WTC11 (cell line): ENCODE measurements at regions of chr12 and their contacts with region 1.

Region 1: DNA sequence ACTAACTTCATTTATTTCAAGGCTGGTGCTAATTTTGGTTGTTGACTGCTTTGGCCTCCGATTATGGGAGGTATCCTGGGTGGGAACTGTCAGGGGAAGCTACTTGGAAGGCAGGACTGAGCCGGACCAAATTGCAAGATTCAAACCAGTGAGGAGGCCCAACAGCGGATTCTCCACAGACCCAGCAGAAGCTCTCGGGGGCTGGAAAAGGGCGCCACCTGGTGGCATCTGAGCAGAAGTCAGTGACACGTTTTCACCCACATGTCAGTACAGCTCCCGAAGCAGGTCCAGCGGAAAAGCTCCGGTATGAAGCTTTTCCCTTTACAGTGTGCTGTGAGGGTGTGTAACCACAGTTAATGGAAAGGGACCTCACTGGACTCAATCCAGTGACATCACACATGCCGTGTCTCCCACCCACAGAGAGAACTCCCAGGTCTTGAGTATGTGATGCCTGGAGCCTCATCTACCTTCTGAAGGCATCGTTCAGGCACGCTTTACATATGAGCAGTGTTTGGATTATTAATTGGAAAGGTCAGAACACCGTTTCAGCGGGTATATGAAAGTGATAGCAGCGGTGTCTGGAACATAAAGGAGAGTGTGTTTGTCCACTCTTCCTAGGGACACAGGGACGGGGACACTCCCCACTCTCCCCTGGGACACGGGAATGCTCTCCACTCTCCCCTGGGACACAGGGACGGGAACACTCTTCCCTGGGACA is 3.6 kb upstream of the P2RX2 start:
- DNase-seq: peak; percentile 88
- ATAC-seq: peak; percentile 63
- H3K4me3 Mint-ChIP-seq: no peak overlapping the region
- H3K27ac Mint-ChIP-seq: no peak overlapping the region
- H3K4me1 Mint-ChIP-seq: peaks cover 5% of the 10 kb centered on the region
- H3K27me3 Mint-ChIP-seq: peaks cover 83% of the 10 kb centered on the region
- CTCF ChIP-seq: peak; percentile 91

Region 2: DNA sequence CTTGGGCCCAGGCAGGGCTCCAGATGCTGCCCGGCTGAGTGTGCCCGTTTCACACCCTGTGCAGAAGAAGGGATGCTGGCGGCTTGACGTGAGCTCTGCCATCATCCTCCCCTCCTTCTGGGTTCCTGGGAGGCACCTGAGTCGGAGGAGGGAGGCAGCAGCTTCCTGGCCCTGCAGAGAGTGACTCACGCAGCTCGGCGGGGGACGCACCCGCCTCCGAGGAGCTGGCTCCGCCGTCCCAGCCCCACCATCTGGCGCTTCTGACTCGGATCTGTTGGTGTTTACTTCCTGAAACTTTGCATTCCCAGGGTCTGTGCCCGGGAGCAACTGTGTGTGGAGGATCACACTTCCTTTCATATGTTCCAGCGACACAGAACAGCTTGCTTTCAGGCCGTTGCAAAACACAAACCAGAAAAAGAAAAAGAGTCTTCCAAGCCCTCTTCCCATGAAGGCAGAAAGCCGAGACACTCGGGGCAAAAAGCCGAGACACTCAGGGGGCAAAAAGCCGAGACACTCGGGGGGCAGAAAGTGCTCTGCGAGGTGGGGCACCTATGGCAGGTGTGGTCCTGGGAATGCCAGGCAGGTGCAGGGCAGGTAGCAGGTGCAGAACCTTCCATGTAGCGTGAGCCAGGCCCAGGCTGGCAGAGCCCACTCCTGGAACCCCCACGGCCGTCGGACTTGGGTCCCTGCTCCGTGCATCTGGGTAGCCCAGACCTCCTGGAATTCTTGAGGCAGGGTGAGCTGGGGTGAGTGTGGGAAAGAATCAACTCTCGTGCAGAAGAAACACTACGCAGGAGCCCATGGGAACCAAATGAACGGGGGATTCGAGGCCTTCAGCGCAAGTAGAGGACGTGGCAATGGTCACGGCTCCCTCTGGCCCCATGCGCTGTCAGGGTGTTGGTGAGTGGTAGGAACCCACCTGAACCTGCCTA is 258.1 kb before region 1 on chr12:
- CTCF ChIA-PET with region 1: no interaction called
- POLR2A ChIA-PET with region 1: no interaction called
- DNase-seq: no peak
- ATAC-seq: peak; percentile 57
- H3K4me3 Mint-ChIP-seq: no peak overlapping the region
- H3K27ac Mint-ChIP-seq: no peak overlapping the region
- H3K4me1 Mint-ChIP-seq: peaks cover 6% of the 10 kb centered on the region
- H3K27me3 Mint-ChIP-seq: peaks cover 37% of the 10 kb centered on the region
- CTCF ChIP-seq: no peak

Region 3: GRCh38 chr12:132439333-132439904 is 175.6 kb before region 1 on chr12:
- CTCF ChIA-PET with region 1: no interaction called
- POLR2A ChIA-PET with region 1: no interaction called
- DNase-seq: no peak
- ATAC-seq: no peak
- H3K4me3 Mint-ChIP-seq: no peak overlapping the region
- H3K27ac Mint-ChIP-seq: no peak overlapping the region
- H3K4me1 Mint-ChIP-seq: peaks cover 16% of the 10 kb centered on the region
- H3K27me3 Mint-ChIP-seq: peaks cover 85% of the 10 kb centered on the region
- CTCF ChIP-seq: no peak

Region 4: DNA sequence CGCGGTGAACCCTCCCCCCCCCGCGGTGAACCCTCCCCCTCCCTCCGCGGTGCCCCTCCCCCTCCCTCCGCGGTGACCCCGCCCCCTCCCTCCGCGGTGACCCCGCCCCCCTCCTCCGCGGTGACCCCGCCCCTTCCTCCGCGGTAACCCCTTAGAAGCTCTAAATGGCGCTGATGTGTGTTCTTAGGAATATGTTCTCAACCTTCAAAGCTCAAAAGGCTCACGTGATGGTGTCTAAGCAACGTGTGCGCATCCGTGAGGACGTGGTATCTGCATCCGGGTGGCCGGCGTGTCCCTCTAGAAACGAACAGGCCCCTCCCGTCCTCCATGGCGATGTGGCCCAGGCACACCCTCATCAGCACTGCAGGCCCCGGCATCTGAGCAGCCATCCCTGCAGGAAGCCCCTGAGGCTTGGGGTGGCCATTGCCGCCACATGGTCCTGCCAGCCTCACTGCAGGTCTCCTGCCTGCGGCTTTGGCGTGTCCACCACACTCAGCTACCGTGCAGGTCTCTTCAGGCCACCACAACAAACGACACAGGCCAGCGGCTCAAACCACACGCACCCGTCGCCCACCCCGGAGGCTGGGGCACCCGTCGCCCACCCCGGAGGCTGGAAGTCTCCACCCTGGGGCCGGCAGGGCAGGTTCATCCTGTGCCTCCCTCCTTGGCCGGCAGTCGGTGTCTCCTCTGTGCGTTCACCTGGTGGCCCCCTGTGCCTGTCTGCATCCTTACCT is 139.5 kb before region 1 on chr12:
- CTCF ChIA-PET with region 1: no interaction called
- POLR2A ChIA-PET with region 1: no interaction called
- DNase-seq: no peak
- ATAC-seq: no peak
- H3K4me3 Mint-ChIP-seq: no peak overlapping the region
- H3K27ac Mint-ChIP-seq: peak overlapping the region; percentile 64; the same call in 1 of the 2 replicates
- H3K4me1 Mint-ChIP-seq: no peaks in the 10 kb centered on the region
- H3K27me3 Mint-ChIP-seq: peaks cover 58% of the 10 kb centered on the region
- CTCF ChIP-seq: no peak

Region 5: DNA sequence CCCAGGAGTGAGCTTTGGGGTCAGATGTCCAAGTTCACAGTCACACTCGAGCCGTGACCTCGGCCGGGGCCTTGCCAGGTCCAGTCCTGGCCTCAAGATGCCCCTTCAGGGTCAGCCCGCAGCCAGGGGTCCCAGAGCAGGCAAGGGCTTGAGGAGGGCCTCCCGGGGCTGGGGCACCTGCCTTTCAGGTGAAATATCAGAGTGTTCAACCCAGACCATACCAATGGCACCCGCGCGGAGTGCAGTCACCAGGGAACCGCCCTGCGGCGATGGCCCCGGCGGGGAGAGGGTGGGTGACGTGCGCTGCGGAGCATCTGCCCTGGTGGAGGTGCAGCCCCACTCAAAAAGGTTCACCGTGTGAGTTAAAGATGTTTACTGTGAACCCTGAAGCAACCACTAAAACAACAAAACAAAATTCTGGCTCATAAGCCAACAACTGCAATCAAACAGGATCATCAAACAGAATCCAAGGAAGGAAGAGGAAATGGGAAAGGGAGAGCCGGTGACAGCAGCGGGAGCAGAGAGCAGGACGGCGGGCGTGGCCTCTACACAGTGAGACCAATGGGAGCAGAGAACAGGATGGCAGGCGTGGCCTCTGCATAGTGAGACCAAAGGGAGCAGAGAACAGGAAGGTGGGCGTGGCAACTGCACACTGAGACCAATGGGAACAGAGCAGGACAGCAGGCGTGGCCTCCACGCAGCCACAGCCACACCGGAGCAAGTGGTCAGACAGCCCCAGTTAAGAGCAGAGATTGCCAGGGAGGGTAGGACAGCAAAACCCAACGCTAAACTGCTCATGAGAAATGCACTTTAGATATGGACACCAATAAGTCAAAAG is 21.3 kb before region 1 on chr12:
- CTCF ChIA-PET with region 1: interaction called, 14 read pairs
- POLR2A ChIA-PET with region 1: interaction called, 3 read pairs
- DNase-seq: peak; percentile 90
- ATAC-seq: peak; percentile 89
- H3K4me3 Mint-ChIP-seq: no peak overlapping the region
- H3K27ac Mint-ChIP-seq: no peak overlapping the region
- H3K4me1 Mint-ChIP-seq: peaks cover 6% of the 10 kb centered on the region; the same call in 1 of the 2 replicates
- H3K27me3 Mint-ChIP-seq: peaks cover 91% of the 10 kb centered on the region
- CTCF ChIP-seq: no peak

Region 6: DNA sequence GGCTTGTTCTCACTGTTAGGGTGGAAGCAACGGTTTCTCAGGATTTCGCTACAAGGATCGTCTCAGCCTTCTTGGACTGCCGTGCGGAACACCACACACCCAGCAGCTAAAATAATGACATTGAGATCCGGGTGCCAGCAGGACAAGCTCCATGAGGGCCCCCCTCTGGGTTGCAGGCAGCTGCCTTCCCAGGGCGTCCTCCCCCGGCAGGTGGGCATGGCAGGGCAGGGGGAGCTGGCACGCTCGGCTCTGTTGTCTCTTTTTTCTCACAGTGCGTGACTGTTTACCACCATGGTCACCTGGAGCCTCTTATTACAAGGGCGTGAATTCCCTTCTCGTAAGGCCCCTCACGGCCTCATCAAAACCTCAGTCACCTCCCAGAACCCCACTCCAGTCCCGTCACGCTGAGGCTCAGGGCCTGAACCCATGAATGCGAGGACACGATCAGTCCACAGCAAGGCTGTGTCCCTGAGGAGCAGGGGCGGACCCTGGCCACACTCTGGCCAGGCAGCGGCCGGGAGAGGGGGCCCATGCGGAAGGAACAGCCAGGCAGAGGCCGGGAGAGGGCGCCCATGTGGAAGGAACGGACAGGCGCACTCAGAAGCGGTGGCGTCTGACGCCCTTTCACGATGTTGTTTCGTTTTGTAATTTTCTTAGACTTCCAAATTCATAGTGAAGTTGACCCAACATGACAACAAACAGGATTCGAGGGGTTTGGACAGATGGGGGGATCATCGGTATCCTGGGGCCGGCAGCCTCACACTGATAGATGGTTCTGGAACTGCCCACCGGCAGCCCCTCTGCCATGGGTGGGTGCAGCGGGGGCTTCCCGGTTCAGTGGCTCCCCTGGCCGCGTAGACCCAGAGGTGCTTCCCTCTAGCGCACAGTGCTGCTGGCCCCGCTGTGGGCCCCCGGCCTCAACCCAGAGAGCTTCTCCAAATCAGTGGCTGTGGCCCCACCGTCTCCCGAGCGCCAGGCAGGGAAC is 14.7 kb before region 1 on chr12:
- CTCF ChIA-PET with region 1: interaction called, 28 read pairs
- POLR2A ChIA-PET with region 1: interaction called, 3 read pairs
- DNase-seq: peak; percentile 78
- ATAC-seq: peak; percentile 73
- H3K4me3 Mint-ChIP-seq: peak overlapping the region; percentile 50
- H3K27ac Mint-ChIP-seq: no peak overlapping the region
- H3K4me1 Mint-ChIP-seq: peaks cover 18% of the 10 kb centered on the region; the same call in 1 of the 2 replicates
- H3K27me3 Mint-ChIP-seq: peaks cover 81% of the 10 kb centered on the region
- CTCF ChIP-seq: no peak

Region 7: GRCh38 chr12:132638541-132639418 is 23.8 kb after region 1 on chr12:
- CTCF ChIA-PET with region 1: interaction called, 18 read pairs
- POLR2A ChIA-PET with region 1: no interaction called
- DNase-seq: peak; percentile 46
- ATAC-seq: peak; percentile 82
- H3K4me3 Mint-ChIP-seq: no peak overlapping the region
- H3K27ac Mint-ChIP-seq: peak overlapping the region; percentile 28; the same call in 1 of the 2 replicates
- H3K4me1 Mint-ChIP-seq: no peaks in the 10 kb centered on the region
- H3K27me3 Mint-ChIP-seq: no peaks in the 10 kb centered on the region
- CTCF ChIP-seq: peak; percentile 57; the same call in 1 of the 2 replicates